Adrenal gland (tissue), 19 donors: ENCODE measurements at regions of chr2 and their contacts with region 1.

Region 1: DNA sequence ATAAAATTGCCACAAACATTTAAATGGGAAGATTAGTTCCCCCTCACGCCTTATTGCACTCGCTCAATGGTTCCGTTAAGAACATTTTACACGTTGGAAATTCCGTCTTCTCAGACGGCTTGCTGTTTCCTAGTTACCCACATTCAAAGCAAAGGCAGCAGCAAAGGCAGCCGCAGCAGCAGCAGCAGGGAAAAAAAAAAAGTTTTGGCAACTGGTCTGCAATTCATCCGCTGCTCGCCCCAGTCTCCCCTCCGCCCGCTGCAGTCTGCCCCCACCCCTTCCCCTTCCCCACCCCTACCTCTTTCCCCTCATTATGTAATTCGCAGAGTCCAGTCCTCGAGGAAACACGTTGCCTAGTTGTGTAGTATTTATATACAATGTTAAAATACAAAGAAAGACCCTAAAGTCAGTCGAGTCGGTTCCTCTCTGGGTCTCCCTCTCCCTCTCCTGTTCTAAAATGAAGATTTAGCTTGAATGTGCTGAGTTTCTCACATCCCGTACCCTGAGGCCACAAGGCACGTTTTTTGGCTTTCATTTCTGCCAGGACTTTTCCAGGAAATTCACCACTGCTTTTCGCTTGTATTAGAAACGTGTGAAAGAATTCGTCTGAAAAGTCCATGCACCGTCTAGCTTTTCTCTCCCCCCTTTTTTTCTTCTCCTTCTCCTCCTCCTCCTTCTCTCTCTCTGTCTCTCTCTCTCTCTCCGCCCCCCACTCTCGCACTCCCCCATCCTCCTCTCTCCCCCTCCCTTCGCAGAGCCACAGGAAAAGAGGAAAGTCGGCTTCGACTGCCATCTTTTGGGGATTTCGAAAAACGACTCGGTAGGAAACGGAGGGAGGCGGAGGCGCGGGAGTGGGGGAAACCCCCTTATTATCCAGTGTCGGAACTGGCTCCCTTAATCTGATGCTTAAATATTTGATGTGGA is 140.0 kb downstream of the MEIS1 start:
- DNase-seq: peak; percentile 82 to 90 (median 87)
- H3K4me3 ChIP-seq: peak overlapping the region in 3 of 4 donors; percentile 54 to 78 (median 67)
- H3K27ac ChIP-seq: peak overlapping the region; percentile 85 to 99 (median 95)
- H3K4me1 ChIP-seq: peaks cover 18 to 46% of the 10 kb centered on the region in 2 donors
- H3K27me3 ChIP-seq: no peaks in the 10 kb centered on the region
- CTCF ChIP-seq: peak in 5 of 6 experiments; percentile 27 to 67 (median 51)
- POLR2A ChIP-seq: peak in 1 of 2 donors; percentile 52

Region 2: GRCh38 chr2:66434679-66435548 is 140.0 kb before region 1 on chr2 and contains the start of gene MEIS1:
- intact Hi-C with region 1: loop called (anchors 5 kb)
- DNase-seq: peak; percentile 89 to 99 (median 97)
- H3K4me3 ChIP-seq: peak within 1 kb of the TSS; percentile 50 to 86 (median 68)
- H3K27ac ChIP-seq: peak within 1 kb of the TSS; percentile 78 to 96 (median 93)
- H3K4me1 ChIP-seq: peaks cover 6 to 19% of the 10 kb centered on the region in 2 donors
- H3K27me3 ChIP-seq: no peaks in the 10 kb centered on the region
- CTCF ChIP-seq: no peak
- POLR2A ChIP-seq: peak; percentile 95 to 100
- total RNA-seq, gene MEIS1: 56.3 to 257 (median 130) TPM

Region 3: GRCh38 chr2:66561645-66562303 is 13.2 kb before region 1 on chr2:
- intact Hi-C with region 1: no loop called
- DNase-seq: no peak
- H3K4me3 ChIP-seq: no peak overlapping the region
- H3K27ac ChIP-seq: peak overlapping the region in 2 of 5 donors; percentile 37 to 47
- H3K4me1 ChIP-seq: peaks cover 21 to 62% of the 10 kb centered on the region in 2 donors
- H3K27me3 ChIP-seq: no peaks in the 10 kb centered on the region
- CTCF ChIP-seq: no peak
- POLR2A ChIP-seq: no peak

Region 4: DNA sequence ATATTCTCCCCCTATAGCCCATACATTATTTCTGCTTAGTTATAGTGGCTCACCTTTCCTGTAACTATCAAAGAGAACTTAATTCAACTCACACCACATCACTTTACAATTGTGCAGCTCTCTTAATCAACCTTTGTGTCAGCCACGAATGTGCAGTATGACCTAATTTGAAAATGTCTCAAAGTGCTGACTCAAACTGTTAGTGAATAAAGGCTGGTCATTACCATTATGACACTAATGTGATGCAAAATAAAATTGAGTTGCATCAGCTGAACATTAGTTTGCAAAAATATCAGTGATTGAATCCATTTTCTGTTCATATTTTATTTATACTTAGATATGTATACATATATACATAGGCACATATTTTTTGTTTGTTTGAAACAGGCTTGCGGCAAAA is 111.8 kb after region 1 on chr2:
- intact Hi-C with region 1: loop called (anchors 5 to 10 kb)
- DNase-seq: no peak
- H3K4me3 ChIP-seq: no peak overlapping the region
- H3K27ac ChIP-seq: peak overlapping the region in 3 of 5 donors; percentile 23 to 77 (median 70)
- H3K4me1 ChIP-seq: peaks cover 17 to 22% of the 10 kb centered on the region in 2 donors
- H3K27me3 ChIP-seq: no peaks in the 10 kb centered on the region
- CTCF ChIP-seq: no peak
- POLR2A ChIP-seq: no peak

Region 5: GRCh38 chr2:67215214-67216055 is 640.5 kb after region 1 on chr2:
- intact Hi-C with region 1: loop called in 1 of 2 experiments (anchors 5 kb)
- DNase-seq: peak; percentile 67 to 92 (median 76)
- H3K4me3 ChIP-seq: peak overlapping the region in 1 of 4 donors; percentile 25
- H3K27ac ChIP-seq: peak overlapping the region in 1 of 5 donors; percentile 47
- H3K4me1 ChIP-seq: peaks cover 0 to 4% of the 10 kb centered on the region in 2 donors
- H3K27me3 ChIP-seq: no peaks in the 10 kb centered on the region
- CTCF ChIP-seq: peak; percentile 31 to 72 (median 57)
- POLR2A ChIP-seq: no peak